ENCODE measurements at regions of chr5 and their contacts with region 1.

Region 1: DNA sequence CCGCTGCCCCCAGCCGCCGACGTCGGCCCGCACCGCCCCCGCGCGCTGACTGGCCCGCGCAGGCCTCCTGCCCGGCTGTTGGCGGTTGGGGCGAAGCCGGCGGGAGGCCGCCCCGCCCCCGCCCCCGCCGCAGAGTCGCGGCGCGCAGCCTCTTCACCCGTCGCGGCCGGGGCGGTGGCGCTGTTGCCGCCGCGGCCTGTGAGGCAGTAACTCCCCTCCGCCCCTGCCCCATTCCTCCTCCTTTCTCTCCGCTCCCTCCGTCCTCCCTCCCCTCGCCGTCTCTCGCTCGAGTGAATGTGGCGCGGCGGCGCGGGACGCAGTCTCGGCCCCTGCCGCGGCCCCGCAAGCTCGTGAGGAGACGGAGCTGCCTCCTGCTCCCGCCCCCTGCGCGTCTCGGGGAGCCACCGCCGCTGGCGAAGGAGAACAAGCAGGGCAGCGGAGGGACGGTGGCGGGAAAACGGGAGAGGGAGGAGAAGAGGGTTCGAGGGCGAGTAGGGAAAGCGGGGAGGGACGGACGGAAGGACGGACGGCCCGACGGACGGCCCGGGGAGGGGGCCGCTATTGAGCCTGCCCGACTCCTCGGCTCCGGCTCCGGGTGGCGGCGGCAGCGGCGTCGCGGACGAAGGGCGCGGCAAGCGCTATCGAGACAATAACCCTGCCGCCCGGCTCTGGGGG is 637 bp upstream of the ERBIN start:
- DNase-seq: peak; percentile 76 to 88 (median 79)
- ATAC-seq: peak; percentile 72 to 75
- H3K4me3 Mint-ChIP-seq: peak overlapping the region; percentile 85 to 96 (median 89)
- H3K27ac Mint-ChIP-seq: peak overlapping the region; percentile 92 to 98 (median 95)
- H3K4me1 Mint-ChIP-seq: peaks cover 19 to 52% (median 32%) of the 10 kb centered on the region in 4 donors
- H3K27me3 Mint-ChIP-seq: no peaks in the 10 kb centered on the region

Region 2: GRCh38 chr5:65721720-65722574 is 203.8 kb before region 1 on chr5 and contains the starts of genes NLN and SGTB:
- POLR2A ChIA-PET with region 1: interaction called, 45 read pairs
- DNase-seq: peak; percentile 67 to 92 (median 84)
- ATAC-seq: peak; percentile 82 to 89
- H3K4me3 Mint-ChIP-seq: peak within 1 kb of the TSS in 9 of 10 donors; percentile 88 to 97 (median 93)
- H3K27ac Mint-ChIP-seq: peak within 1 kb of the TSS; percentile 74 to 96 (median 88)
- H3K4me1 Mint-ChIP-seq: peaks cover 10 to 29% (median 14%) of the 10 kb centered on the region in 4 donors
- H3K27me3 Mint-ChIP-seq: no peaks in the 10 kb centered on the region
- polyA plus RNA-seq, gene NLN: 2.3 to 4.9 (median 3.7) TPM
- polyA plus RNA-seq, gene SGTB: 12.5 to 15.4 (median 15.0) TPM

Region 3: DNA sequence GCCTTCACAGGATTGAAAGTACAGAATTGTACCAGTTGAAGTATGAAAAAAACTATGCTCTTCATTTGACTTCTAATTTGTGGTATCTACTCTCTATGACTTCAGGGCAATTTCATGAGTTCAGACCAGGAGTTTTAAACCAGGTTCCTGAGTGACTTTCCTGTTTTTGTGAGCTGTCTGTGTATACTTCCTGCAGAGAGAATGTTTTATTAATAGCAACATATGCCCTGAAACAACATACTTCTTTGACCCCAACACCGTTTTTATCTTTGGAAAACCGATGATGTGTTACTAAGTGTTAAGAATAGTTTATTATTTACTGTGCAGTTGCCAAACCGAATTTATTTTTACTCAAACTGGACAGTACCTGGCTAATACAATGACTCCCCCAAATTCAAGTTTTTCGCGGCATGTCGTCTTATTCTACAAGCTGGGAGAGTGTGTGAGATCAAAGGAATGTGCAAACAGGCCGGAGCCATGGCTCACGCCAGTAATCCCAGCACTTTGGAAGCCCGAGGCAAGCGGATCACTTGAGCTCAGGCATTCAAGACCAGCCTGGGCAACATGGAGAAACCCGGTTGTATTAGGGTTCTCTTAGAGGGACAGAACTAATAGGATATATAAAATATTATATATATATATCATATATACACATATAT is 58.1 kb before region 1 on chr5:
- POLR2A ChIA-PET with region 1: interaction called, 28 read pairs
- DNase-seq: peak in 3 of 10 donors; percentile 4 to 8 (median 4)
- ATAC-seq: peak; percentile 51 to 57
- H3K4me3 Mint-ChIP-seq: peak overlapping the region; percentile 64 to 84 (median 76)
- H3K27ac Mint-ChIP-seq: peak overlapping the region; percentile 72 to 98 (median 87)
- H3K4me1 Mint-ChIP-seq: peaks cover 17 to 29% (median 27%) of the 10 kb centered on the region in 4 donors
- H3K27me3 Mint-ChIP-seq: no peaks in the 10 kb centered on the region

Region 4: GRCh38 chr5:66144074-66144833 is 218.5 kb after region 1 on chr5 and contains the start of gene SREK1:
- POLR2A ChIA-PET with region 1: interaction called, 39 read pairs
- DNase-seq: peak; percentile 79 to 93 (median 85)
- ATAC-seq: peak; percentile 88 to 90
- H3K4me3 Mint-ChIP-seq: peak within 1 kb of the TSS; percentile 96 to 100 (median 98)
- H3K27ac Mint-ChIP-seq: peak within 1 kb of the TSS; percentile 99 to 100 (median 100)
- H3K4me1 Mint-ChIP-seq: peaks cover 11 to 50% (median 40%) of the 10 kb centered on the region in 4 donors
- H3K27me3 Mint-ChIP-seq: peaks cover 0 to 1% (median 0%) of the 10 kb centered on the region in 5 donors
- polyA plus RNA-seq, gene SREK1: 15.2 to 21.4 (median 17.6) TPM